HEK293 (cell line): ENCODE measurements at regions of chr1 and their contacts with region 1.

Region 1: DNA sequence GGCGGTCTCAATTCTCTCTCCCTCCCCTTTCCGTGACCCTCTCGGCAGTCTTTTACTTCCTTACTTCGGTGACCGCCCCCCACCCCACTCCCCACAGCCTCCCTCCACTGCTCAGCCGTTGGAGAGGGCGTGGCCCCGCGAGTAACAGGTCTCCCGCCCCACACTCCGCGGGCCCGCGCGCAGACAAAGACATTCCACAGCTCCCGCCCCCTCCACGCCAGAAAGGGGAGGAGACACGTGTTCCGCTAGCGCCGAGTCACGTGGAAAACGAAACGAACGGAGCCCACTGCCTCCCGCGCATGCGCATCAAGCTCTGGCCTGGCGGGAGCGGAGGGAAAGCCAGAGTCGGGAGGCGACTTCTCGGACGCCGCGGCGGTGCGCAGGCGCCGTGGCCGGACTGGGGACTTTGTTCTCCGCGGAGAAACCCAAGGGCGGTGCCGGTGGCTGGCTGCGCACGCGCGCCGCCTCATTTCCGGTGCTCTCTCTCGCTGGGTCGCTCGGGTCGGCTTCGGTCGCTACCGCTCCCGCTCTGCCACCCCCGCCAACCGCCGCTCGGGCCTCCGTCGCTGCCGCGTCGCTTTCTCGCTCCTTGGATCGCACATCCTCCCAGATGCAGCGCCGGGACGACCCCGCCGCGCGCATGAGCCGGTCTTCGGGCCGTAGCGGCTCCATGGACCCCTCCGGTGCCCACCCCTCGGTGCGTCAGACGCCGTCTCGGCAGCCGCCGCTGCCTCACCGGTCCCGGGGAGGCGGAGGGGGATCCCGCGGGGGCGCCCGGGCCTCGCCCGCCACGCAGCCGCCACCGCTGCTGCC is at the start of gene KHDRBS1:
- H3K4me3 ChIP-seq: peak within 1 kb of the TSS; percentile 95
- H3K27ac ChIP-seq: peak within 1 kb of the TSS; percentile 81
- H3K4me1 ChIP-seq: 0 out of 2 replicates have a peak, but pooled peaks cover 2% of the 10 kb centered on the region
- CTCF ChIP-seq: no peak

Region 2: DNA sequence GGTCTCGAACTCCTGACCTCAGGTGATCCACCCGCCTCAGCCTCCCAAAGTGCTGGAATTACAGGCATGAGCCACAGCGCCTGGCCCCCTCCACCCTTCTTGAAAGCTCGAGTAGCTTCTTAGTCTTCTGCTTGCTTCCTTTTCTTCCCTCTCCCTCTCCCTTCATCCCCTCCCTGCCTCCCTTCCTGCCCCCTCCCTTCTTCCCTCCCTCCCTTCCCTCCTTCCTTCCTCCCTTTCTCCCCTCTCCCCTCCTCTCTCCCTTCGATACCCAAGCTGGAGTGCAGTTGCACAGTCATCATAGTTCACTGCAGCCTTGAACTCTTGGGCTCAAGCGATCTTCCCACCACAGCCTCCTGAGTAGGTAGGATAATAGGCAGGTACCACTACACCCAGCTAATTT is 11.9 kb after region 1 on chr1:
- CTCF ChIA-PET with region 1: interaction called, 4 read pairs
- POLR2A ChIA-PET with region 1: interaction called, 14 read pairs
- H3K4me3 ChIP-seq: no peak overlapping the region
- H3K27ac ChIP-seq: no peak overlapping the region
- H3K4me1 ChIP-seq: peaks cover 9% of the 10 kb centered on the region; the same call in 1 of the 2 replicates
- CTCF ChIP-seq: no peak

Region 3: DNA sequence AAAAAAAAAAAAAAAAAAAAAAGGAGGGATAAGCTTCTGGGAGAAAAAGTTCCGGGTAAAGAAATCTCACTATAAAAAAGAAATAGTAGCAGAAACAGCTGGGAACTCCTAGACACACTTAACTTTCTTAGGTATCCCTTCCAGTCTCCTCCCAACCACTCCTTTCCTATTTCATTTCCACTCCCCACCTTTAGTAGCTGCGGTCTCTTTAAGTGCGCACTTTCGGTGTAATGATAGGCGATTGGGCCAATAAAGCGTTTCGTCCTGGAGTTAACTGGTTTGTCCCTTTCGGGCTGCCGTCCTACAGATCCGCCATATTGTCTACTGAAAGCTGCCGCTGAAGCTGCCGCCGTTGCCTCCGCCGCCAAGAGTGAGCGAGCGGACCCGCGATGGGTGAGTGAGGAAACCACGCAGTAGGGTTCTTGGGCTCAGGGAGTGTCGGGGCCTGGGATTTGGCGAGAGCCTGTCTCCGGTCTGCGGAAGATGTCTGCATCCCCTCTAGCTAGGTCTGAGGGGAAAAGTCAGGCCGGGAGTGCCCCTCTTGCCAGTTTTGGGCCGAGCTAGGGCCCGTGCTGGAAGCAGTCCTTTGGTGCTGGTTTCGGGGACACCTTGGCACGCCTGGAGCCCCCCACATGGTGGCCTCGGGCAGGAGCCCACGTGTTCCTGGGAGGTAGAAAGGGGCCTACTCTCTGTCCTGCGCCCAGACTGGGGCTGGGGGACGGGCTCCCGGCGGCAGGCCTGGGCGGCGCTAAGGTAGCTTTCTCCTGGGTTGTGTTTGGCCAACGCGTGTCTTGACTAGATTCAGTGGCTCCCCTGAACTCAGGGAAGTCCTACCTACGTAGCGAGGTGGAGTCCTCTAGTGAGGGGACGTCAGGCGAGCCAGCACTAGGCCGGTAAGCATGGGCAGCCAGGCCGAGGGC is 94.4 kb after region 1 on chr1 and contains the start of gene KPNA6:
- CTCF ChIA-PET with region 1: no interaction called
- POLR2A ChIA-PET with region 1: interaction called, 11 read pairs
- H3K4me3 ChIP-seq: peak within 1 kb of the TSS; percentile 94
- H3K27ac ChIP-seq: peak within 1 kb of the TSS; percentile 72
- H3K4me1 ChIP-seq: peaks cover 9% of the 10 kb centered on the region
- CTCF ChIP-seq: no peak